ENCODE measurements at regions of chr16 and their contacts with region 1.

Region 1: GRCh38 chr16:67055712-67056487 is 27.0 kb downstream of the CBFB start:
- DNase-seq: no peak

Region 2: GRCh38 chr16:67702130-67702529 is 646.2 kb after region 1 on chr16:
- CTCF ChIA-PET with region 1: interaction called, 11 read pairs
- POLR2A ChIA-PET with region 1: no interaction called
- DNase-seq: no peak

Measured in HEK293T (cell line).